ENCODE measurements at regions of chr9 and their contacts with region 1.

Region 1: DNA sequence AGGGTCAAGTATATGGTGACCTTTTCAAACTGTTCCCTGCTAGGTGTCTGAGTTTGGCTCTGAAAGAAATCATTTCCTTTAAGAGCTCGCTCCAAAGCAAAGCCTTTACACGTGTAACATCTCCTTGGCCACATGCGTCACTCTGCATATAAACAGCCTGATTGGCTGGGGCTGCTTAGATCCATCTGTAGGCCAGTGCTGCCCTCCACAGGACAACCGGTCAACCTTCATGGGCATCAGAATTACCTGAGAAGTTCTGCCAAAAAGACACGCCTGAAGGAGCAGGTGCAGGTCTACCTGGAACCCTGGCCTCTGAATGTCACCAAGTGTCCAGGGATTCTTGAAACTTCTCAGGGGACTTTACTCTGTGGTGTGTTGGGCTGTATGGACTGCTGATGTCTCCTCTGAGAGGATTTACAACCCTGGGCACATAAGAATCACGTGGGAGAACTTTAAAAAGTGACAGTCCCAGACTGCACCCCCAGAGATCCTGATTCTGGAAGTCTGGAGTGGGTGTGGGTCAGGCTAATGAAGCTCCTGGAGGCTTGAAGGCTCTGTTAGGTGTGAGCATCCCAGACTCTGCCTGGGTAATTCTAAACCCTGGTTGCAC is 497.6 kb downstream of the GADD45G start:
- DNase-seq: peak; percentile 74 to 83 (median 79)
- H3K4me3 ChIP-seq: no peak overlapping the region
- H3K4me3 Mint-ChIP-seq: no peak overlapping the region
- H3K27ac ChIP-seq: no peak overlapping the region
- H3K27ac Mint-ChIP-seq: peak overlapping the region in 3 of 7 donors; percentile 28 to 53 (median 41)
- H3K4me1 ChIP-seq: no peaks in the 10 kb centered on the region
- H3K4me1 Mint-ChIP-seq: peaks cover 0 to 6% (median 3%) of the 10 kb centered on the region in 4 donors
- H3K27me3 ChIP-seq: no peaks in the 10 kb centered on the region
- H3K27me3 Mint-ChIP-seq: peaks cover 0 to 4% of the 10 kb centered on the region in 2 donors

Region 2: GRCh38 chr9:89576404-89576839 is 526.0 kb before region 1 on chr9:
- CTCF ChIA-PET with region 1: interaction called, 14 read pairs
- POLR2A ChIA-PET with region 1: no interaction called
- intact Hi-C with region 1: no loop called
- DNase-seq: peak in 4 of 5 donors; percentile 16 to 38 (median 24)
- H3K4me3 ChIP-seq: no peak overlapping the region
- H3K4me3 Mint-ChIP-seq: no peak overlapping the region
- H3K27ac ChIP-seq: no peak overlapping the region
- H3K27ac Mint-ChIP-seq: no peak overlapping the region
- H3K4me1 ChIP-seq: peaks cover 5% of the 10 kb centered on the region
- H3K4me1 Mint-ChIP-seq: peaks cover 7 to 12% (median 9%) of the 10 kb centered on the region in 4 donors
- H3K27me3 ChIP-seq: peaks cover 10% of the 10 kb centered on the region
- H3K27me3 Mint-ChIP-seq: peaks cover 32 to 37% of the 10 kb centered on the region in 2 donors

Region 3: DNA sequence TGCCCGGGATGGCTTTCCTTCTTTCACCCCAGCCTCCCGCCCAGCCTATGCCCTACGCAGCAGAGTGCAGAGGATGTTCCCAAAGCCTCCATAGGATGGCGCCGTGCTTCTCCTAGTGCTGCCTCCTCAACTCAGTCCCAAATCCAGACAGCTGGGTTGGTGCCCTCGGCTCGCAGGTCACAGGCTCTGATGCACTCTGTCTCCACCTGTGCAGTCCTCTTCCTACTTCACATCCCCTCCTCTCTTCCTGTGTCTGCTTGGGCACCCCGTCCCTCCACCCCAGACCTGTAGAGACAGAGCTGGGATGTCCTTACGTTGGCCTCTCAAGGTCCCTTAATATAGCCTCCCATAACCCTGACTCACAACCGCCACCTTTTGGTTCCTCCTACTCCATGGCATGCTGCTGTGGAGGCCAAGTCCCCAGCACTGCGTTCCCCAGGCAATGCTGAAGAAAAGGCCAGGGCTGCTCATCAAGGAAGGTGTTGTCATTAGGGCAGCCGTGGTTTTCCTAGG is 183.2 kb before region 1 on chr9:
- CTCF ChIA-PET with region 1: interaction called, 3 read pairs
- POLR2A ChIA-PET with region 1: no interaction called
- intact Hi-C with region 1: loop called (anchors 2 kb)
- DNase-seq: peak in 4 of 5 donors; percentile 8 to 32 (median 22)
- H3K4me3 ChIP-seq: no peak overlapping the region
- H3K4me3 Mint-ChIP-seq: no peak overlapping the region
- H3K27ac ChIP-seq: no peak overlapping the region
- H3K27ac Mint-ChIP-seq: no peak overlapping the region
- H3K4me1 ChIP-seq: no peaks in the 10 kb centered on the region
- H3K4me1 Mint-ChIP-seq: peaks cover 4 to 13% (median 7%) of the 10 kb centered on the region in 4 donors
- H3K27me3 ChIP-seq: no peaks in the 10 kb centered on the region
- H3K27me3 Mint-ChIP-seq: peaks cover 2 to 8% of the 10 kb centered on the region in 2 donors